Activated CD4-positive, alpha-beta memory T cell treated with anti-CD3 and anti-CD28 coated beads for 36 hours (primary cell): ENCODE measurements at regions of chr2 and their contacts with region 1.

Region 1: DNA sequence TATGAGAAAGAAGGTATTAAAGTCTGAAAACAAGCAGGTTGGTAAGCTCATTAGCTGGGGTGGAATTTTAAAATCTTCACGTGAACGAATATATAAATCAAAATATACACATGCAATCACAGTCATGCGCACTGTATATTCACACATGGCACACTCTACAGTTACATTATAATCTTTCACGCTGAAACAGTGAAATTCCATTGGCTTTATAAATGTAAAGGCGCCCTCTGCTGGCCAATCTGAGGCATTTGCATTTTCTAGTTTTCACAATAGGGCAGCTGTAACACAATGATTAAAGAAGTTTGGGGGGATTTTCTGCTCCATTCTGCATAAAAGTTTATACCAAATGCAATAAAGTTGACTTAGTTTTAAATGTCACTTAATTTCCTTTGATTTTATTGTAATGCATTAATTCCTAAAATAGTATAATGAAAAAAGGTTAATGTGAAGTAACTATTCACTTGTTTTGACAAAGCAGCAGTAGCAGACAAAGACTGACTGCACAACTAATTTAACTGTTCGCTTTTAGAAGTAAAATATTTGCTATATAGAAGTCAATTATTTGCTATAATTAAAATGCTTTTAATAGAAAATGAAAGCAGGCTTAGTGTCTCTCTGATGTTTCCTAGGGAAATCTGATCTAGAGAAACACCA is 17.2 kb downstream of the IFIH1 start:
- DNase-seq: peak; percentile 68
- H3K4me3 Mint-ChIP-seq: no peak overlapping the region
- H3K27ac Mint-ChIP-seq: no peak overlapping the region
- H3K4me1 Mint-ChIP-seq: no peaks in the 10 kb centered on the region
- H3K27me3 Mint-ChIP-seq: no peaks in the 10 kb centered on the region

Region 2: GRCh38 chr2:161384864-161385263 is 916.4 kb before region 1 on chr2:
- CTCF ChIA-PET with region 1: no interaction called
- POLR2A ChIA-PET with region 1: no interaction called
- intact Hi-C with region 1: no loop called
- DNase-seq: peak; percentile 15
- H3K4me3 Mint-ChIP-seq: no peak overlapping the region
- H3K27ac Mint-ChIP-seq: no peak overlapping the region
- H3K4me1 Mint-ChIP-seq: peaks cover 9% of the 10 kb centered on the region
- H3K27me3 Mint-ChIP-seq: no peaks in the 10 kb centered on the region

Region 3: GRCh38 chr2:162065767-162066166 is 235.5 kb before region 1 on chr2:
- CTCF ChIA-PET with region 1: no interaction called
- POLR2A ChIA-PET with region 1: no interaction called
- intact Hi-C with region 1: no loop called
- DNase-seq: no peak
- H3K4me3 Mint-ChIP-seq: no peak overlapping the region
- H3K27ac Mint-ChIP-seq: no peak overlapping the region
- H3K4me1 Mint-ChIP-seq: peaks cover 63% of the 10 kb centered on the region
- H3K27me3 Mint-ChIP-seq: no peaks in the 10 kb centered on the region

Region 4: DNA sequence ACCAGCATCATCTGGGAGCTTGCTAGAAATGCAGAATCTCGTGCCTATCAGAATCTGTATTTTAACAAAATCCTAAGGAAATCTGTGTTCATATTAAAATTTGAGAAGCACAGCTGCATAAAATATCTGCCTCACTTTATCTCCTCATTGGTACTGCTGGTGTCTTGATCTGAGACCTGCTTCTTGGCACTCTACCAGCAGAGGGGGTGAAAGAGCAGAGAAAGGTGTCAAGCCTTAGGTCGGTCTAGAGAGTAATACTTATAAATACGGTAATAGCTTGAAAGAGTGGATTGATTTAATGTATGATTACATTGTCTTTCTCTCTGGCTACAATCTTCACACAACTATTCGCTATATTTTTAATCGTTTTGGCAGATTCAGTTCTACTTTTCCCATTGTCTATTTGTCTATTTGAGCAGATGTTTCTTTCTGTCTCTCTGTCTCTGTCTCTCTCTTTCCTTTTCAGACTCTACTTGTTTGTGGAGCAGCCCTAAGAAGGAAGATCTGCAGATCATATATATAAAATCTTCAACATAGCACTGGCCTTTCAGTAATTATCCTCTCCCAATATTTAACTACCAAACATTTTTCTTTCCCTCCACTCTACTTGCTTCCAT is 147.6 kb before region 1 on chr2:
- CTCF ChIA-PET with region 1: interaction called, 182 read pairs
- POLR2A ChIA-PET with region 1: no interaction called
- intact Hi-C with region 1: loop called (anchors 1 kb)
- DNase-seq: peak; percentile 70
- H3K4me3 Mint-ChIP-seq: no peak overlapping the region
- H3K27ac Mint-ChIP-seq: no peak overlapping the region
- H3K4me1 Mint-ChIP-seq: peaks cover 4% of the 10 kb centered on the region
- H3K27me3 Mint-ChIP-seq: peaks cover 17% of the 10 kb centered on the region

Region 5: GRCh38 chr2:162226836-162227235 is 74.4 kb before region 1 on chr2:
- CTCF ChIA-PET with region 1: interaction called, 321 read pairs
- POLR2A ChIA-PET with region 1: no interaction called
- intact Hi-C with region 1: no loop called
- DNase-seq: no peak
- H3K4me3 Mint-ChIP-seq: no peak overlapping the region
- H3K27ac Mint-ChIP-seq: no peak overlapping the region
- H3K4me1 Mint-ChIP-seq: no peaks in the 10 kb centered on the region
- H3K27me3 Mint-ChIP-seq: no peaks in the 10 kb centered on the region

Region 6: GRCh38 chr2:162277381-162277780 is 23.9 kb before region 1 on chr2:
- CTCF ChIA-PET with region 1: interaction called, 12 read pairs
- POLR2A ChIA-PET with region 1: no interaction called
- intact Hi-C with region 1: no loop called
- DNase-seq: no peak
- H3K4me3 Mint-ChIP-seq: no peak overlapping the region
- H3K27ac Mint-ChIP-seq: no peak overlapping the region
- H3K4me1 Mint-ChIP-seq: peaks cover 6% of the 10 kb centered on the region
- H3K27me3 Mint-ChIP-seq: no peaks in the 10 kb centered on the region

Region 7: DNA sequence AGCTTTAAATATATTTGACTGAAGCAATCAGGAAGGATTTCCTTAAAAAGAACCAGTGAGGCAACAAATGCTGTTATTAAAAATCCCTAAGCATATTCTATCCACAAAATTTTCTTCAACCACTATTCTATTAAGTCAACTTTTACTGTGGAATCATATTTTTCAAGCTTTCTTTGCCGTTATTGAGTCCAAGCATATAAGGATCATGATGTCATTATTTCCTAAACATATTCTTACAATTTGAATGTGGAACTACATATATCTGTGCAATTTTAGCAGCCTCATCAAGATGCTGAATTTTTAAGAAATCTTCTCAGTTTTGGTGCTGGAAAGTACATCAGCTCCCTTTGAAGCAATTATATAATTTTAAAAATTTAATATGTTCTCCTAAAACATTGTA is 11.6 kb after region 1 on chr2:
- CTCF ChIA-PET with region 1: interaction called, 20 read pairs
- POLR2A ChIA-PET with region 1: no interaction called
- intact Hi-C with region 1: loop called (anchors 1 kb)
- DNase-seq: no peak
- H3K4me3 Mint-ChIP-seq: no peak overlapping the region
- H3K27ac Mint-ChIP-seq: no peak overlapping the region
- H3K4me1 Mint-ChIP-seq: peaks cover 67% of the 10 kb centered on the region
- H3K27me3 Mint-ChIP-seq: no peaks in the 10 kb centered on the region

Region 8: DNA sequence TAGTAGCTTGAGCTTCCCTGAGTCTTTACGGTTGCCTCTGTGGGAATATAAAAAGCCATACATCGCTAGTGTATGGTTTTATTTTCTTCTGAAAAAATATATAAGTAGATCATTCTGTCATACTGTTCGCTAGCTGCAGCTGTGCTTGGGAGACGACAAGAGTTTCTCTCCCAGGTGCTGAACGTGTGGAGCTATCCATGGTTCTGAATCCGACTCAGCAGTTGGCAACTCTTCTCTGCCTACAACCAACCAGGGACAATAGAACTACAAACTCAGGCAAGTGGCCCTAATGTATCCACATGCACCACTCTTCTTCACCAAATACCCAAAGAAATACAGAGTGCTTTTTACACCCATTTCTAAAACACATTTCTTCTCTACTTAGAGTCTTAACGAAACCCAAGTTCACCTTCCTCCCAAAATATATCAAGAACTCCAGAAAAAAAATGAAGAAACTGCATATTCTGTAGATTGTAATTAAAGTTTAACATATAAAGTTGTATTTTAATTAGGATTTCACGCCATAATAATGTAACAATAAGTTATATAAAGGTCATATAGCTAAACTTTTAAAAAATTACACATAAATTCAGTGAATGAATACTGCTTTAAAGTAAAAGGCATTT is 539.5 kb after region 1 on chr2:
- CTCF ChIA-PET with region 1: no interaction called
- POLR2A ChIA-PET with region 1: no interaction called
- intact Hi-C with region 1: no loop called
- DNase-seq: peak; percentile 37
- H3K4me3 Mint-ChIP-seq: no peak overlapping the region
- H3K27ac Mint-ChIP-seq: no peak overlapping the region
- H3K4me1 Mint-ChIP-seq: no peaks in the 10 kb centered on the region
- H3K27me3 Mint-ChIP-seq: peaks cover 11% of the 10 kb centered on the region